ENCODE measurements at regions of chr16 and their contacts with region 1.

Region 1: DNA sequence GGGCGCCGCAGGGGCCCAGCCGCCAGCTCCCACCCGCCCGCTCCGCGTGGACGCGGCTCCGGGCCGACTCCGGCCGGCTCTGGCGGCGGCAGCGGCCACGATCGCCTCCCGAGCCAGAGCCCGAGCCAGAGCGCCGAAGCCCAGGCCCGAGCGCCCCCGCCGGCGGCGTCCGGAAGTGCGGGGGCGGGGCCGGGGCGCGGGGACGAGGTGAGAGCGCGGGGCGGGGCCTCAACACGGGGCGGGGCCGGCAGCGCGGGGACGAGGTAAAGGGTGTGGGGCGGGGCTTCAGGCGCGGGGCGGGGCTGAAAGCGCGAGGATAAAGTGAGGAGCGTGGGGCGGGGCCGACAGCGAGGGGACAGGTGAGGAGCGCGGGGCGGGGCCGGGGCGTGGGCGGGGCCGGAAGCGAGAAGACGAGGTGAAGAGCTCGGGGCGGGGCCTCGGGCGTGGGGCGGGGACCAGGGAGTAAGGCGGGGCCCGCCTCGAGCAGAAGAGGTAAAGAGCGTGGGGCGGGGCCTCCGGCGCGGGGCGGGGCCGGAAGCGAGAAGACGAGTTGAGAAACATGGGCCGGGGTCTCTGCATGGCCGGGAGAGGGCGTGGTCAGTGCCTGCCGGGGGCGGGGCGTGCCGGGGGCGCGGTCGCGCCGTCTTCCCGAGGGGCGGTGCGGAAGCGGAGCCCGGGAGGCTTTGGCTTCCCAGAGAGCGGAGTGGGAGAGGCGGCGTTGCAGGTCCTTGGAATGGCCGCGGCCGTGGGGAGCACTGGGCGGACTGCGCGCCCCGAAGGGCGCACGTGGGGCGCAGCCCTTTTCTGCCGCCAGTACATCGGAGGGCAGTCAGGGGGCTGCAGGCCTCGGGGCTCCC is at the start of gene AXIN1:
- DNase-seq: peak; percentile 100
- ATAC-seq: peak; percentile 89
- H3K4me3 Mint-ChIP-seq: peak within 1 kb of the TSS; percentile 80
- H3K27ac Mint-ChIP-seq: peak within 1 kb of the TSS; percentile 79
- H3K4me1 Mint-ChIP-seq: peaks cover 45% of the 10 kb centered on the region
- H3K27me3 Mint-ChIP-seq: no peaks in the 10 kb centered on the region
- total RNA-seq, gene AXIN1: 20.0 to 23.8 TPM

Region 2: DNA sequence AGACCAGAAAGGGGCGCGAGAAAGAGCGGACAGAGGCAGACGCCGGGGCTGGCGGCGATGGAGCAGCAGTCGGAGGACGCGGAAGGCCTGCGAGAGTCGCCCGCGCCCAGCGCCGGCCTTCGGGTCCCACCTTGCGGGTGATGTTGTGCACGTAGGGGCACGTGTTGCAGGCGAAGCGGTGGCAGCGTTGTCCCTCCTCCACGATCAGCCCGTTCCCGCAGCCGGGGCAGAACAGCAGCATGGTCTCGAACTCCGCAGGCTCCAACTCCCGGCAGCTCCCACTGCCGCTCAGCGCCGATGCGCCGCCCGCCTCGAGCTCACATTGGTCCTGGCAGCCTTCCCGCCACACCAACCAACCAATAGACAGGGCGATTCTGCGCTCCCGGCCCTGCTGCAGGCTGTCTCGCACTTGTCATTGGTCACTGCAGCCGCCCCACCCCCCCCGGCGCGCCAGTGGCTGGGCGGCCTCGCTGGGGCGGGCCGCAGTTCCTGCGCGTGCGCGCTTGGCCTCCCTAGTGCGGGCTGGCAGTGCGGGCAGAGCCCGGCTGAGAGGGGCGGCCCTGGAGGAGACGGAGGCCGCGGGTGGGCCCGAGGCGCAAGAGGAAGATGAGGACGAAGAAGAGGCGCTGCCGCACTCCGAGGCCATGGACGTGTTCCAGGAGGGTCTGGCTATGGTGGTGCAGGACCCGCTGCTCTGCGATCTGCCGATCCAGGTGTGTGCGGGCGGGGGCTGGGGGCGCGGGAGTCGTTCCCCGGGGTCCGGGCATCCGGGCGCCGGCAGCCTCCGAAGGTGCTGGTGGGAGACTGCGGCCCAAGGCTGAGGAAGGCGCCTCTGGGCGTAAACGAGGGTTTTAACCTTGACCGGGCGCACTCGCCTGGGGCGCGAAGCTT is 299.2 kb before region 1 on chr16 and contains the starts of genes POLR3K and SNRNP25:
- CTCF ChIA-PET with region 1: no interaction called
- POLR2A ChIA-PET with region 1: no interaction called
- intact Hi-C with region 1: loop called in 1 of 2 experiments (anchors 1 kb)
- DNase-seq: peak; percentile 100
- ATAC-seq: peak; percentile 98
- H3K4me3 Mint-ChIP-seq: peak within 1 kb of the TSS; percentile 94
- H3K27ac Mint-ChIP-seq: peak within 1 kb of the TSS; percentile 90
- H3K4me1 Mint-ChIP-seq: peaks cover 30% of the 10 kb centered on the region
- H3K27me3 Mint-ChIP-seq: no peaks in the 10 kb centered on the region
- total RNA-seq, gene POLR3K: 31.9 to 46.8 TPM
- total RNA-seq, gene SNRNP25: 42.5 to 50.0 TPM

Region 3: DNA sequence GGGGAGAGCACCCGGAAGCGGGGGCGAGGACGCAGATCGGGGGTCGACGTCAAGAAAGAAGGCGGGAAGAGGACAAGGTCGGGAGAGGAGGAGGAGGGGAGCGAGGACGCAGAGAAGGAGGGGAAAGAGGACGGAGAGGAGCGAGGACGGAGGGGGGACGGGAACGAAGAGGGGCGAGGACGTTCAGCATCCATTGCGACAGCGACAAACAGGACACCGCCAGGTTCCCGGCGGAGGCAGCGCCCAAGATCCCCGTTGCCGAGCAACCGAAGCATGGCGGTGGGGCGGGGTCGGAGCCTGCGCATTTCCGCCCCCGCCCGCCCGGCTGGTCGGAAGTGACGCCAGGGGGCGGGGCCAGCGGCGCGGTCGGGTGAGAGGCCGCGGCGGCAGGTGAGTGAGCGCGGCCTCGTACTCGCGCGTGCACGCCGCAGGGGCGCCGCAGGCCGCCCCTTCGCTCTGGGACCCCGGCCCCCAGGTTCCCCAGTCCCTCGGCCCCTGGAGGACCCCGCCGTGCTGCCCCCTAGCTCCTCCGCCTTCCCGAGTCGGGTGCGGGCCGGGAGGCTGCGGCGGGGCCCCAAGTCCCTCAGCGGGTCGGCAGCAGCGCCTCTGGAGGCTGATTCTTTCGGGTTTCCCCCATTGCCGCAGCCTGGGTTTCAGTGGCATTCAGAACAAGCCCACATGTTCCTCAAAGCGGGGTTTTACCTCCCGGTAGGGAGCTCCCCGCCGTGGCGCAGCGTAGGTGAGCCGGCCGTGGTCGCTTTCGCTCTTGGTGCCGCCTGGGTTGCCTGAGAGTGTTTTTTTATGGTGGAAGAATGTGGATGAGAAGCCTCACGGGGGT is 118.1 kb before region 1 on chr16 and contains the start of gene FAM234A:
- CTCF ChIA-PET with region 1: interaction called, 4 read pairs
- POLR2A ChIA-PET with region 1: interaction called, 4 read pairs
- intact Hi-C with region 1: loop called (anchors 1 kb)
- DNase-seq: peak; percentile 98
- ATAC-seq: peak; percentile 91
- H3K4me3 Mint-ChIP-seq: peak within 1 kb of the TSS; percentile 90
- H3K27ac Mint-ChIP-seq: peak within 1 kb of the TSS; percentile 96
- H3K4me1 Mint-ChIP-seq: peaks cover 17% of the 10 kb centered on the region
- H3K27me3 Mint-ChIP-seq: no peaks in the 10 kb centered on the region
- total RNA-seq, gene FAM234A: 11.3 to 15.2 TPM

Region 4: DNA sequence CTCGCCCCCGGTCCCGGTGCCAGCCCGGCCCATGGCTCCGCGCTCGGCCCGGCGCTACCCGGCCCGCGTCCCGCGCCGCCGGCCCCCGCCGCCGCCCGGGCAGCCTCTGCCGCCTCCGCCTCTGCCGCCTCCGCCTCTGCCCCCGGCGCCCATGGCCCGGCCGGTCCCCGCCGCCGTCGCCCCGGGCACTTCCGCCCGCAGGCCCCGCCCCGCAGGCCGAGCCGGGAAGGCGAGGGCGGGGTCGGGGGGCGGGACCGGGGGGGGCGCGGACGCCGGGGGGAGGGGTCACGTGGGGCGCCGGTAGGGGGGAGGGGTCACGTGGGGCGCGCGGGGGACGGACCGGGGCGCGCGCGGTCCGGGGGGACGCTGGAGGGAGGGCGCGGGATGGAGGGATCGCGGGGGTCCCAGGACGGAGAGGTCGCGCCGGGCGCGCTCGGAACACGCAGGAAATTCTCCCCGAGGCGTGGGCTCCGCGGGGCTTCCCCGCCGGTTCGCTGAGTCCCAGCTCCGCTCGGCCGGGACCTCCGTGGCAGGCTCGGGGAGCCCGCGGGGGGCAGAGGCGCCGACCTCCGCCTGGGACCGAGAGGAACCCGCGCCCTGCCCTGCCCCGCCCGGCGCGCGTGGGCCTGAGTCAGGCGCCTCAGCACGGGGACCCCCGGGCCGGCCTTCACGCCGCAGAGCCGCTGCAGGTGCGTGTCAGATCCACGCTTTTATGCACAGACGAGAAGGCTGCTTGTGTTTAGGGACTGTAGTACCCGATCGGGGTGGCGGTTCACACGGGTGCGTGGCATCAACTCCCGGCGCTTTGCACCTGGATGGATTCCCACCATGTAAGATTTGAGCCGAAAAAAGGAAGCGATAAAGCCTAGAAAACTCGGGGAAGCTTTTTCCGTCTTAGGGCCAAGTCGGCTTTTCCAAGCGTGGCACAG is 29.3 kb after region 1 on chr16 and contains the start of gene PGAP6:
- CTCF ChIA-PET with region 1: no interaction called
- POLR2A ChIA-PET with region 1: no interaction called
- intact Hi-C with region 1: loop called in 1 of 2 experiments (anchors 1 kb)
- DNase-seq: peak; percentile 83
- ATAC-seq: peak; percentile 73
- H3K4me3 Mint-ChIP-seq: peak within 1 kb of the TSS; percentile 74
- H3K27ac Mint-ChIP-seq: no peak within 1 kb of the TSS
- H3K4me1 Mint-ChIP-seq: peaks cover 24% of the 10 kb centered on the region
- H3K27me3 Mint-ChIP-seq: no peaks in the 10 kb centered on the region
- total RNA-seq, gene PGAP6: 22.9 to 40.8 TPM

Region 5: GRCh38 chr16:554640-555365 is 202.0 kb after region 1 on chr16:
- CTCF ChIA-PET with region 1: no interaction called
- POLR2A ChIA-PET with region 1: no interaction called
- intact Hi-C with region 1: no loop called
- DNase-seq: no peak
- ATAC-seq: no peak
- H3K4me3 Mint-ChIP-seq: no peak overlapping the region
- H3K27ac Mint-ChIP-seq: no peak overlapping the region
- H3K4me1 Mint-ChIP-seq: no peaks in the 10 kb centered on the region
- H3K27me3 Mint-ChIP-seq: peaks cover 6% of the 10 kb centered on the region

Region 6: DNA sequence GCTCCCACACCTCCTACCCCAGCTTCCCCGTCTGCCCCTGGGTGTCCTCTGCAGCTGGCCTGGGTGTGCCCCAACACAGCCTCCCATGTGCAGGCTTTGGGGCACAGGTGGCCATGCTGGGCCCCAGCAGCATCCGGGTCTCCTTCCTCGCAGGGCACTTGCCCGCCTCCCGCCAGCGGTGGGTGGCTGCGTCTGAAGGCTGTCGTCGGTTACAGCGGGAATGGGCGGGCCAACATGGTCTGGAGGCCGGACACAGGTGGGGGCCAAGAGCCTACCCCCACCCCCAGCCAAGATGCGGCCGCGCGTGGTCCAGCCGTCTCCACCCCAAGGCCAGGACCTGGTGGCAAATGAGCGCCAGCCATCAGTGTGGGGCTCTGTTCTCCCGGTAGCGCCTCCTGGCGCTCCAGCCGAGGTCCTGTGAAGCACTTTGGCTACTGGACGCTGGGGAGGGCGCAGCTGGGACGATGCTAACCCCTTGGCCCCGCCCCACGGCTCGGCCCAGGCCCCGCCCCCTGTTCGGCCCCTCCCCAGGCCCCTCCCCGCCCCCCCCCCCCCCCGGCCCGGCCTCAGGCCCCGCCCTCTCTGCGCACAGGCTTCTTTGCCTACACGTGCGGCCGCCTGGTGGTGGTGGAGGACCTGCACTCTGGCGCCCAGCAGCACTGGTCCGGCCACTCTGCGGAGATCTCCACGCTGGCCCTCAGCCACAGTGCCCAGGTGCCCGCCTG is 307.8 kb after region 1 on chr16:
- CTCF ChIA-PET with region 1: no interaction called
- POLR2A ChIA-PET with region 1: no interaction called
- intact Hi-C with region 1: loop called in 1 of 2 experiments (anchors 1 kb)
- DNase-seq: peak; percentile 87
- ATAC-seq: peak; percentile 85
- H3K4me3 Mint-ChIP-seq: peak overlapping the region; percentile 35
- H3K27ac Mint-ChIP-seq: peak overlapping the region; percentile 60
- H3K4me1 Mint-ChIP-seq: peaks cover 5% of the 10 kb centered on the region
- H3K27me3 Mint-ChIP-seq: no peaks in the 10 kb centered on the region

Region 7: DNA sequence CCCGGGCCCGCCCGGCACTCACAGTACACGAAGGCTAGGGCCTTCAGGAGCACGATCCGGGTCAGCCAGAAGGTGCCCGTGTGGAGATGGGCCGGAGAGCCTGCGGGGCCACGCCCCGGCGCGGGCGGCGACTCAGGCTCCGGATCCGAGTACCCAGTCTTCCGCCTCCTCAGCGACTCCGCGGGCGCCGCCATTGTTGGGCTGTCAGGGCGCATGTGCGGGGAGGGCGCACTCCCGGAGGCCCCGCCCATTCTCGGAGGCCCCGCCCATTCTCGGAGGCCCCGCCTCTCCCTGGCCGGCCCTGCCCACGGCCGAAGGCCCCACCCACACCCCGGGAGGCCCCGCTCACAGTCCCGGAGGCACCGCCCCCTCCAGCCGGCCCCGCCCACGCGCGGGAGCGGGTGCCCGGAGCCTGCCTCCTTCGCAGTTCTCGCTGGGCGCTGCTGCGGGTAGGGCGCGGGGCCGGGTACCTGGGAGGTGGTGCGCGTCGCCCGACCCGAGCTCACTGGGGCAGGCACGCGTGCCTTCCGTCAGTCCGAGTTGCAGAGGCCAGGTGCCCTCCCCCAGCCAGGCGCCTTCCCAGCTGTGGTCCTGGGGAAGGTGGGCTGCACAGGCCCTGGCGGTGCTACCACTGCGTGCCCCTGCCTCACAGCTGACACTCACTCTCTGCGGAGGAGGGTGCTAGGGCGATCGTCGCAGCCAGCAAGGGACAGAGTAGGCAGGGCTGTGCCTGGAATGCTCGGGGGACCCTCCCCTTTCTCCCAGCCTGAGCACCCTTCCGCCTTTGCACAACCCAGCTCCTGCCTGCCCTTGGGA is 618.2 kb after region 1 on chr16 and contains the start of gene LMF1:
- CTCF ChIA-PET with region 1: no interaction called
- POLR2A ChIA-PET with region 1: no interaction called
- intact Hi-C with region 1: loop called in 1 of 2 experiments (anchors 2 kb)
- DNase-seq: peak; percentile 98
- ATAC-seq: peak; percentile 93
- H3K4me3 Mint-ChIP-seq: peak within 1 kb of the TSS; percentile 76
- H3K27ac Mint-ChIP-seq: peak within 1 kb of the TSS; percentile 78
- H3K4me1 Mint-ChIP-seq: peaks cover 15% of the 10 kb centered on the region
- H3K27me3 Mint-ChIP-seq: no peaks in the 10 kb centered on the region
- total RNA-seq, gene LMF1: 9.5 to 12.2 TPM